ENCODE measurements at regions of chr22 and their contacts with region 1.

Region 1: GRCh38 chr22:39170825-39171622 is 18.5 kb upstream of the CBX7 start:
- DNase-seq: peak; percentile 92
- ATAC-seq: peak; percentile 83

Region 2: DNA sequence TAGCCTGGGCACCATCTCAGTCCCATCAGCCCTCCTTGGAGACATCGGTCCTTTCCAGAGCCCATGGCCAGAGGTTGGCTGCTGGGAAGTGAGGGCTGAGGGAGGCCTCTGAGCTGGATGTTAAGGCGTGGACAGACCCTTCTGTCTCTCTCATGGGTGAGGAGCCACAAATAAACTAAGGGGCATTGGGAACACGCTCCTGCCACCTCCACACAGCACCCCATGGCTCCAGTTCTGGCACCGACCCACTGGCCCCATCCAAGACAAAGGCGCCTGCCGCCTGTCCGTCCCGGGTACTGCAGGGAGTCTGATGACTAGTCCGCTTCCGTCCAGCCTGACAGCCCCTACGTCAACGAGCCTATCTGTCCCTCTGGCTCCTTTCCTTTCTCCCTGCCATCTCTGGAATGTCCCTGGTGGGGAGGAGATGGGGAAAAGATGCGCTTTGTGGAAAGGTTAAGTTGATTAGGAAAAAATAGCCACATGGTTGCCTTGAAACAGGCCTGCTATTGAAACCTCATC is 63.3 kb after region 1 on chr22:
- intact Hi-C with region 1: loop called (anchors 2 kb)
- DNase-seq: peak; percentile 76
- ATAC-seq: peak; percentile 60

Region 3: GRCh38 chr22:39308614-39309363 is 137.8 kb after region 1 on chr22:
- intact Hi-C with region 1: loop called (anchors 2 kb)
- DNase-seq: peak; percentile 76
- ATAC-seq: peak; percentile 51

Region 4: GRCh38 chr22:39319270-39320022 is 148.4 kb after region 1 on chr22 and contains the start of gene RPL3:
- intact Hi-C with region 1: loop called (anchors 2 kb)
- DNase-seq: peak; percentile 99
- ATAC-seq: peak; percentile 93
- total RNA-seq, gene RPL3: 355 TPM

Region 5: DNA sequence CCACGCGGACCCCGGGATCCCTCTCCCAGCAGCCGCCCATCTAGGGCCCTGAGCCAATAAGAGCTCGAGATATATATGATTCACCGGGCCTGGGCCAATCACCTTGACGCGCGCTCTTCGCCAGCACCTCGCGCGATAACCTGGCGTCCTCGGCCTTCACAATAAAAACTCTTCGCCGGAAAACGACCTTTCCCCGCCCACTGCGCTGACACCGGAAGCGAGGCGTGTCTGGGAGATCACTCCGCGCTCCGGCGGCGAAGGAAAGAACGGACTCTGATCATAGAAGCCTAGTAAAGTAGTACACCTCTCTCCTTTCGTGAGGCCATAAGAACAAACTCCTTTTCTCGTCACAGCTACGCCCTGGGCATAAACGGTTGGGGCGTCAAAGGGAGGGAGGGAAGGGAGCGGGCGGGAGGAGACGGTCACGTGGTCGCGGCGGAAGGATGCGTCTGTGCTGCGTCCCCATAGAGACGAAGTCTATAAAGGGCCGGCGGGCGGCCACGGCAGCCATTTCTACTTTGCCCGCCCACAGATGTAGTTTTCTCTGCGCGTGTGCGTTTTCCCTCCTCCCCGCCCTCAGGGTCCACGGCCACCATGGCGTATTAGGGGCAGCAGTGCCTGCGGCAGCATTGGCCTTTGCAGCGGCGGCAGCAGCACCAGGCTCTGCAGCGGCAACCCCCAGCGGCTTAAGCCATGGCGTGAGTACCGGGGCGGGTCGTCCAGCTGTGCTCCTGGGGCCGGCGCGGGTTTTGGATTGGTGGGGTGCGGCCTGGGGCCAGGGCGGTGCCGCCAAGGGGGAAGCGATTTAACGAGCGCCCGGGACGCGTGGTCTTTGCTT is 349.2 kb after region 1 on chr22 and contains the start of gene ATF4:
- intact Hi-C with region 1: loop called (anchors 10 kb)
- DNase-seq: peak; percentile 99
- ATAC-seq: peak; percentile 88
- total RNA-seq, gene ATF4: 204 TPM

Measured in Right ventricle myocardium inferior (tissue), 1 donor.